Mammary epithelial cell (primary cell): ENCODE measurements at regions of chr20 and their contacts with region 1.

Region 1: GRCh38 chr20:19370099-19371075 is 157.9 kb downstream of the SLC24A3 start:
- DNase-seq: no peak
- H3K4me3 ChIP-seq: no peak overlapping the region
- H3K27ac ChIP-seq: no peak overlapping the region
- H3K4me1 ChIP-seq: no peaks in the 10 kb centered on the region
- H3K27me3 ChIP-seq: no peaks in the 10 kb centered on the region
- CTCF ChIP-seq: no peak

Region 2: DNA sequence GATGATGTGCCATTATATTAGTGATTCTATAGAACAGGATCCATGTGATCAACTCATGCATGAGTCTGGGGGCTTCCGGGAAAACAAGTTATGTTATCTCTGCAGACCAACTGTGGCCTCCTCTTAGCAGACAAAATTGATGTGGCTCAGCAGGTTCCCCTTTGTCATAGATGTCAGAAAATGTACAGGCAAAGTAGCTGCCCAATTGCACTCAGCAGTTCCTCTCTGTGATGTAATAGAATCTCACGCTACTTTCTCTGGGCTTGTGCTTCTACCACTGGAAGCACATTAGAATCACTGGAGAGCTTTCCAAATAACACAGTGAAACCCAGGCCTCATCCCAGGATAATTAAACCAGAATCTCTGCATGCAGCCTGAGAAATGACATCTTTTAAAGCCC is 95.1 kb after region 1 on chr20:
- CTCF ChIA-PET with region 1: no interaction called
- dilution Hi-C with region 1: loop called (anchors 5 kb)
- in situ Hi-C with region 1: no loop called
- intact Hi-C with region 1: no loop called
- DNase-seq: no peak
- H3K4me3 ChIP-seq: no peak overlapping the region
- H3K27ac ChIP-seq: no peak overlapping the region
- H3K4me1 ChIP-seq: no peaks in the 10 kb centered on the region
- H3K27me3 ChIP-seq: no peaks in the 10 kb centered on the region
- CTCF ChIP-seq: no peak

Region 3: DNA sequence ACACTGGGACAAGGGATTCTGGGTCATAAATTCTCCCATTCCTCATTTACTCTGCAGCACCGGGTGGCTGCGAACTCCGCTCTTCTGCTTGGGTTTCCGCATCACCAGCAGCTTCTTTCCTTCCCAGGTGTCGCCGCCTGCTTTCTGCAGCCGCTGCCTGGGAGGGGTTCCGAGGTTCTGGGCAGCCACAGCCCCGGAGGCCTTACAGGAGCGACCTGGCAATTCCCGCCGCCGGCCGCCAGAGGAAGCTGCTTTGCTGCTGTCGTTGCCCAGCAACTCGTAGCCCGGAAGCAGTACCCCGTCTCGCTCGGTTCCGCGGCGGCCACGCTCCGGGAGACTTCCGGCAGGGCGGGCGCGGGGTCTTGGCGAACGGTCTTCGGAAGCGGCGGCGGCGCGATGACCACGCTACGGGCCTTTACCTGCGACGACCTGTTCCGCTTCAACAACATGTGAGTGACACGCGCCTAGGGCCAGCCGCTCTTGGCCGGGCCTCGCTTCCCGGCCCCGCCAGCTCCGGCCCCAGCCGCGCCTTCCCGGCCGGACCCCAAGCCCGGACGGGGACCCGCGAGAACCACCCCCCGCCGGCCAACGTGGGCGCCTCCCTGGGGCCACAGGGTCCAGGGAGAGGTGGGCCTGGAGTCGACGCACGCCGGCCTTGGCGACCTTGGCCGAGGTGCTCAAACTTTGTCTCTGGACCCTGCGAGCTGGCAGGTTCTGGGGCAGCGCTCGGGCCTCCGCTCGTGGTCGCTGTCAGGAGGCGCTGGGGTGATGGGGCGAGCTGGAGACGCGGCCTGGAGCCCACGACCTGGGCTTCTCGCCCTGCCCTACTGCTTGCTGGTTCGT is 646.8 kb after region 1 on chr20 and contains the start of gene NAA20:
- CTCF ChIA-PET with region 1: no interaction called
- dilution Hi-C with region 1: no loop called
- in situ Hi-C with region 1: no loop called
- intact Hi-C with region 1: no loop called
- DNase-seq: peak; percentile 86
- H3K4me3 ChIP-seq: peak within 1 kb of the TSS; percentile 87 to 100 (median 97)
- H3K27ac ChIP-seq: peak within 1 kb of the TSS; percentile 82
- H3K4me1 ChIP-seq: peaks cover 21% of the 10 kb centered on the region
- H3K27me3 ChIP-seq: no peaks in the 10 kb centered on the region
- CTCF ChIP-seq: peak; percentile 48 to 77
- total RNA-seq, gene NAA20: 44.3 to 105 TPM